Natural killer cell (primary cell): ENCODE measurements at regions of chr2 and their contacts with region 1.

Region 1: GRCh38 chr2:237878-238277 is 26.0 kb downstream of the SH3YL1 start:
- DNase-seq: peak; percentile 25 to 41
- ATAC-seq: peak; percentile 85 to 95 (median 85)
- H3K4me3 ChIP-seq: no peak overlapping the region
- H3K4me3 Mint-ChIP-seq: peak overlapping the region; percentile 84
- H3K27ac ChIP-seq: peak overlapping the region; percentile 41
- H3K27ac Mint-ChIP-seq: peak overlapping the region; percentile 91 to 94
- H3K4me1 ChIP-seq: peaks cover 27% of the 10 kb centered on the region
- H3K4me1 Mint-ChIP-seq: peaks cover 42 to 47% of the 10 kb centered on the region in 2 donors
- H3K27me3 ChIP-seq: no peaks in the 10 kb centered on the region
- H3K27me3 Mint-ChIP-seq: no peaks in the 10 kb centered on the region
- CTCF ChIP-seq: no peak

Region 2: DNA sequence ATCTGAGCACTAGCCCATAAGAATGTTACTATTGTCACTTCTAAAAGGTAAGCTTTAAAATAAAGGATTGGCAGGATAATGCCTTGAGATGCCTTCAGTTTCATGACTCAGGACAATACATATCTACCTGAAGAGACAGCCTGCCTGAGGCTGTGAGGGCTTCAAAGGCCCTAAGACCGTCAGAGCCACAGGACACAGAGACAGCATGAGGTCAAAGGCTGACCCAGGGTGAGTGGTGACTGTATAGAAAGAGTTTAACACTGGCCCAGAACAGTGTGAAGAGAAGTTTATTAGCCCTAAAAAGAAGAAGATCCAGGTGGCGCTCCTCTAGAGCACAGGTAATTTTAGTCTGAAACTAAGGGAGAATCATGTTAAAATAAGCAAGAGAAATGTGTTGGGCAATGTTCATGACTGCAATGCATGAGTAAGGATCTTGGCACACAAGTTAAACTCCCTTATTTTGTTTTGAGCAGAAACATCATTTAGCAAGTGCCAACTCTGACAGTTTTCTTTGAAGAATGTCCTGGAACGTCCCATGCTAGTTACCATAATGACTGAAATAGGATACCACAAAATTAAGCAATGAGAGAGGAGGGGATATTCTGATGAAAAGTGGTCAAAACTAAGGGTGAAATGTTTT is 113.5 kb before region 1 on chr2:
- intact Hi-C with region 1: no loop called
- DNase-seq: no peak
- ATAC-seq: no peak
- H3K4me3 ChIP-seq: no peak overlapping the region
- H3K4me3 Mint-ChIP-seq: no peak overlapping the region
- H3K27ac ChIP-seq: no peak overlapping the region
- H3K27ac Mint-ChIP-seq: no peak overlapping the region
- H3K4me1 ChIP-seq: no peaks in the 10 kb centered on the region
- H3K4me1 Mint-ChIP-seq: no peaks in the 10 kb centered on the region
- H3K27me3 ChIP-seq: no peaks in the 10 kb centered on the region
- H3K27me3 Mint-ChIP-seq: peaks cover 16 to 41% of the 10 kb centered on the region in 2 donors
- CTCF ChIP-seq: no peak

Region 3: DNA sequence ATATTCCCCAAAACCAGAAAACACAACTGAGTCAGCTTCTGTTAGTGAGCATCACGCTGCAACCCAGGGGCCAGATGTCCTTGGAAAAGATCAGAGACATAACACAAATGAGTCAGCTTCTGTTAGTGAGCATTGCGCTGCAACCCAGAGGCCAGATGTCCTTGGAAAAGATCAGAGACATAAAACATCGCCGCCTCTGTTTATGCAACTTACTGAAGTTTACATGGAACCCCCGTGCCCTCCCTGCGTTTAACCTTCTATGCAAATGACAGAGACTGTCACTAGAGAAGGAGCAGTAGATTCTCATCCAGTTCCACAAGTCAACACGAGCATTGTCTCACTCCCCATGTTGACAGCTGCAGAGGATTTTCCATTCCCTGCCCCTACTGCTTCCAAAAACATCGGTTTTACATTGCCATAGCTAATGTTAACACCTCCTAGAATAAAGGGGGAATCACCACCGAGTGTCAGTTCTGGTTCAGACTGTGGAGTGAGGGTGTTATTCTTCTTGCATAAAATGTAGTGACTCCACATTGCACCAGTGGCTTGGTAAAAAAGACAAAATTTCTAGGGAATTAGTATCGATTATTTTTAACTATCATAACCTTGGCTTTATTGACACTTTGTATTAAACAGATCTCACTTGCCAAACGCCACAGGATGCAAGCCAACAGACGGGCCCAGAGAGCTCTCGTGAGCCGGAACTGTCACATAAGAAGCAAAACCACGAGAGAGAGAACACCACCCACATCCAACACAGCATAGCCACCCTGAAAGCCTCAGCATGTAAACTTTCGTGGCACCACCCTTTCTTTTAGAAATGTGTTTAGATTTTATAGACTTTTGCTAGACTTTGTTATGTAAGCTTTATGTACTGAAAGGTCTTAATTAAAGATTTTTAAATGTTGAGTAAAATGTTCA is 61.7 kb before region 1 on chr2:
- intact Hi-C with region 1: loop called (anchors 5 kb)
- DNase-seq: peak; percentile 46 to 83
- ATAC-seq: peak; percentile 86 to 99 (median 92)
- H3K4me3 ChIP-seq: no peak overlapping the region
- H3K4me3 Mint-ChIP-seq: peak overlapping the region; percentile 88
- H3K27ac ChIP-seq: peak overlapping the region; percentile 20
- H3K27ac Mint-ChIP-seq: peak overlapping the region; percentile 76 to 88
- H3K4me1 ChIP-seq: peaks cover 30% of the 10 kb centered on the region
- H3K4me1 Mint-ChIP-seq: peaks cover 51 to 61% of the 10 kb centered on the region in 2 donors
- H3K27me3 ChIP-seq: peaks cover under 1% of the 10 kb centered on the region
- H3K27me3 Mint-ChIP-seq: no peaks in the 10 kb centered on the region
- CTCF ChIP-seq: no peak